ENCODE measurements at regions of chr9 and their contacts with region 1.

Region 1: DNA sequence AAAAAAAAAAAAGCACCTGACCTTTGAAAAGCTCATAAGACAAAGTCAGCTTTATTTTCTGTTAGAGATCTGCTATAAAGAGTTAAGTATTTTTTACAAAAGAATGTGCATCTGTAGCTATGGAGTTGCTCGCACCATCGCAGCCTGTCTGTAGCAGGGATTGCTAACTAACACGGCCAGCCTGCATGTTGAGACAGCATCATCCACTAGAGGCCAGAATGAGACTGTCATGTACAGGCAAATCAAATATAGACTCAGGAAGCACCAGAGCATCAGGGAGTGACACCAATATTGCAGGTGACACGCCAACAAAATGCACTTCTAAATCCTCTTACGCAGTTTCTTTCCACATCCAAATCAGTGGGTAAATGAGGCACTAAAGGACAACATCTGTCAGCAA is 136.3 kb upstream of the RASEF start:
- DNase-seq: peak; percentile 65
- H3K4me3 ChIP-seq: no peak overlapping the region
- H3K27ac ChIP-seq: no peak overlapping the region
- H3K4me1 ChIP-seq: no peaks in the 10 kb centered on the region
- H3K27me3 ChIP-seq: peaks cover 11 to 17% of the 10 kb centered on the region in 2 experiments
- CTCF ChIP-seq: peak; percentile 54 to 70
- POLR2A ChIP-seq: no peak

Region 2: DNA sequence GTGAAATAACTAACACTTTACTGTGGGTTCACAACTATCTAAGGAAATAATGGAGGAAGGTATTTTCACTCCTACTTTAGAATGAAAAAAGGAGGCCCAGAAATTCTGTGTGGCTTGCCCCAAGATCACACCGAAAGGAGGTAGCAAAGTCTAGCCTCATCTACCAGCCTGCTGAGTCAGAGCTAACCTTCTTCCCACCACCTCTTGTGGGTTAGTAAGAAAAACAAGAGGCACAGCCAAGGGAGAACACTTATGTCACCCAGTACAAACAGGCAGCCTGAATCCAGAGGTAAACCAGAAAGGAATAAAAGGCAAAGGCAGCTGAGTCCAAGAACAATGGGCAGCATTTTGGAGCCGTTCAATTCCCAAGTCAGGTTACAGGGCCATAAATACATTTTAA is 44.4 kb before region 1 on chr9:
- CTCF ChIA-PET with region 1: no interaction called
- POLR2A ChIA-PET with region 1: no interaction called
- dilution Hi-C with region 1: no loop called
- intact Hi-C with region 1: no loop called
- DNase-seq: no peak
- H3K4me3 ChIP-seq: no peak overlapping the region
- H3K27ac ChIP-seq: no peak overlapping the region
- H3K4me1 ChIP-seq: no peaks in the 10 kb centered on the region
- H3K27me3 ChIP-seq: no peaks in the 10 kb centered on the region
- CTCF ChIP-seq: no peak
- POLR2A ChIP-seq: no peak

Region 3: GRCh38 chr9:83182071-83182470 is 17.2 kb before region 1 on chr9:
- CTCF ChIA-PET with region 1: no interaction called
- POLR2A ChIA-PET with region 1: no interaction called
- dilution Hi-C with region 1: no loop called
- intact Hi-C with region 1: no loop called
- DNase-seq: no peak
- H3K4me3 ChIP-seq: no peak overlapping the region
- H3K27ac ChIP-seq: no peak overlapping the region
- H3K4me1 ChIP-seq: no peaks in the 10 kb centered on the region
- H3K27me3 ChIP-seq: no peaks in the 10 kb centered on the region
- CTCF ChIP-seq: no peak
- POLR2A ChIP-seq: no peak

Region 4: DNA sequence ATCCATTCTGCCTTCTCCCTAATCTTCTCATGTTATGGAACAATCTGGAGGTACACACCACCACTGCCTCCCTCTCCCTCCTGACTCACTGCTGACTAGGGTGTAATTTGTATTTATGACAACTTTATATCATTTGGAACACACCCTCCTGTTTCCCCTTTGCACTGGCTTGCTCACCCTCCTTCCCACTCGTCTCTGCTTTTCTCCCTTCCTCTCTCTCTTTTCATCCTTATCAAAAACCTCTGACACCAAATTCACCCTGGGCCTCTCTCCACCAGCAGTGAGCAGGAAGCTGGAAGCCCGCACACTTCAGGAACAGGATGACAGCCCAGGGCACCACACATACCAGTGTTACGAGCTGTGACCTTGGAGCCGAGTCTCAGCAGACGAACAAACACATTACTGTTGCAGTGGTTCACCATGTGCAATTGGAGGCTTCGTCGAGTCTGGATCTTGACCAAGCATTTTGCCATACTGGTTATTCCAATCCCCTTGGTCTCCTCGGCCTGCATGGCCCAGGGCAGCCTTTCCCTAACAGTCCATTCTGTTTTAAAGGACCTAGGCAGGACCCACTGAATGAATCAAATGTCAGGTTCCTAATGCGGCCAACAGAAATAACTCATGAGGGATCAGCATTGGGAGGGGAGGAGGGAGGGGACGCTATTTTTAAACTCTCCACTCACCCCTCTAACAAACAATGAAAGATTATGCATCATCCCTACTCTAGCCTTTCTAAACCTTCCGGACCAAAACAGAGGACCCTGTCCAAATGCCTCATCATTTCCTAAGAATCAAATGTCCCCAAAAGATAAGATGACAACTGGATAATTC is 67.6 kb after region 1 on chr9:
- CTCF ChIA-PET with region 1: no interaction called
- POLR2A ChIA-PET with region 1: no interaction called
- dilution Hi-C with region 1: no loop called
- intact Hi-C with region 1: no loop called
- DNase-seq: peak; percentile 67
- H3K4me3 ChIP-seq: peak overlapping the region in 1 of 3 experiments; percentile 60
- H3K27ac ChIP-seq: peak overlapping the region; percentile 79
- H3K4me1 ChIP-seq: peaks cover 72% of the 10 kb centered on the region
- H3K27me3 ChIP-seq: no peaks in the 10 kb centered on the region
- CTCF ChIP-seq: no peak
- POLR2A ChIP-seq: peak; percentile 61

Region 5: DNA sequence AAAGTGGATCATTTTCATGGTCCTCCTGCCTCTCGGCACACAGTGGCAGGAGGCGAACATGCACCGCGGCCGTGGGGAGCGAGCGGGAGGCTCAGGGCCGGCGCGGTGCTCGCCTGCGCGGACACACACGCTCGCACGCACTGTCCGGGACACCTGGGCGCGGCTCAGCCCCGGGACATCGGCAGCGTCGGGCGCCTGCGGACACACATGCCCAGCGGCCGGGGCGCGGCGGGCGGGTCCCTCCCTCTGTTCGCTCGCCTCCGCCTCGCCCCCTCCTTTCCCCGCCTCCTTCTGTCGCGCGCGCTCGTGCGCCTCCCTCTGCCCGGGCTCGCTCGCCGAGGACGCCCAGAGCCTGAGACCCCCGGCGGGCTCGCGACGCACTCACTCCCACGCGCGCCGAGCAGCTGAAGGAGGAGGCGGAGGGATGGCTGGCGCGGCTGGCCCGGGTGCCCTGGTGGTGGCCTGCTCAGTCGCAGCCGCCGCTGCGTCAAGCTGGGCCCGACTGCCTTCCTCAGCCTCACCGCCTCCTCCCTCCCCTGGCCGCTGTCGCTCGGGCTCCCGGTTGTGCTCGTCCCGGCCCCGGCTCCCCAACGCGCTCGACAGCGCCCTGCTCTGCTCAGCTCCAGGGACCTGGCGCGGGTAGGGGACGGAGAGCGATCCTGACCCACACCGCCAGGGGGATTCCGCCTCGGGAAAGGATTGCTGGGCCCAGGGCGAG is 339.1 kb after region 1 on chr9 and contains the start of gene FRMD3:
- CTCF ChIA-PET with region 1: interaction called, 85 read pairs
- POLR2A ChIA-PET with region 1: no interaction called
- dilution Hi-C with region 1: no loop called
- intact Hi-C with region 1: loop called (anchors 1 kb)
- DNase-seq: peak; percentile 66
- H3K4me3 ChIP-seq: peak within 1 kb of the TSS; percentile 29 to 40 (median 36)
- H3K27ac ChIP-seq: no peak within 1 kb of the TSS
- H3K4me1 ChIP-seq: peaks cover 6% of the 10 kb centered on the region
- H3K27me3 ChIP-seq: peaks cover 8 to 19% of the 10 kb centered on the region in 2 experiments
- CTCF ChIP-seq: peak; percentile 61 to 79
- POLR2A ChIP-seq: no peak
- total RNA-seq, gene FRMD3: 6.1 and 7.3 TPM in 2 replicates

Region 6: DNA sequence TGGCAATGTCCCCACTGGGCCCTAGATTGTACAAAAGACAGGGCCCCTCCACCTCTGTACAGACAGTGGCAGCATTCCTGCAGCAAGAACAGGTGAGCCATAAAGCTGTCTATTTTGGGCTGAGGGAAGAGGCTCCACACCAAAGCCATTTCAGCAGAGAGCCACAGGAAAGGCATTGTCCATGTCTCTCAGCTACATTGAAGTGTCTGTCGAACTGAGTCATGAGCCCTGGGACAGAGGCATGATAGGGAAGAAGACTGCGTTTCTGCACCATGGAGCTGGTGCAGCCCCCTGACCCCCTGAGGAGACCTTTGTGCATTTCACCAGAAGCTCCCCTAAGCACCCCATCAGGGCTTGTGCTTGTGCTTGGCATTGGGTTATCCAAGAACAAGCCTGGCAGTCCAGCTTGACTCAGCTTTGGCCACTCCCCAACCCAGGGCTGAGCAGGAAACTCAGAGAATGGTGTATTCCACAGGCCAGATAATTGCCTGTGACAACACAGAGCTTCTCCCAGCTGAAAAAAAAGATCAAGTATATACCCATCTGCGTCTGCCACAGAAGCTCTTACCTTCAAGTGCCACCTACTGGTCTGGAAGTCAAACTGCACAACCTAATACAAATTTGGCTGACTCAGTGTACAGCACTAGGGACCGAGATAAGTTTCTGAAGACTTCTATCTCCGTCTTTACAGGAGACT is 344.9 kb after region 1 on chr9:
- CTCF ChIA-PET with region 1: interaction called, 85 read pairs
- POLR2A ChIA-PET with region 1: no interaction called
- dilution Hi-C with region 1: no loop called
- intact Hi-C with region 1: loop called (anchors 1 kb)
- DNase-seq: peak; percentile 65
- H3K4me3 ChIP-seq: no peak overlapping the region
- H3K27ac ChIP-seq: no peak overlapping the region
- H3K4me1 ChIP-seq: no peaks in the 10 kb centered on the region
- H3K27me3 ChIP-seq: peaks cover 2% of the 10 kb centered on the region in 2 experiments
- CTCF ChIP-seq: peak; percentile 70 to 75
- POLR2A ChIP-seq: no peak

Region 7: GRCh38 chr9:83596896-83597504 is 397.8 kb after region 1 on chr9:
- CTCF ChIA-PET with region 1: interaction called, 7 read pairs
- POLR2A ChIA-PET with region 1: no interaction called
- dilution Hi-C with region 1: no loop called
- intact Hi-C with region 1: loop called (anchors 1 kb)
- DNase-seq: peak; percentile 31
- H3K4me3 ChIP-seq: no peak overlapping the region
- H3K27ac ChIP-seq: no peak overlapping the region
- H3K4me1 ChIP-seq: no peaks in the 10 kb centered on the region
- H3K27me3 ChIP-seq: no peaks in the 10 kb centered on the region
- CTCF ChIP-seq: peak; percentile 70 to 72
- POLR2A ChIP-seq: no peak

Region 8: DNA sequence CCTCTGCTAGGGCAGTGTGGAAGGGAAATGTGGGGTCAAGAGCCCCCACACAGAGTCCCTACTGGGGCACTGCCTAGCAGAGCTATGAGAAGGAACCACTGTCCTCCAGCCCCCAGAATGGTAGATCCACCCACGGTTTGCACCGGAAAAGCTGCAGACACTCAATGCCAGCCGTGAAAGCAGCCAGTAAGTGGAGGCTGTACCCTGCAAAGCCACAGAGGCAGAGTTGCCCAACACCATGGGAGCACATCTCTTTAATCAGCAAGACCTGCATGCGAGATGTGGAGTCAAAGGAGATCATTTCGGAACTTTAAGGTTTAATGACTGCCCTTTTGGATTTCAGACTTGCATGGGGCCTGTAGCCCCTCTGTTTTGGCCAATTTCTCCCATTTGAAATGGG is 566.1 kb after region 1 on chr9:
- CTCF ChIA-PET with region 1: no interaction called
- POLR2A ChIA-PET with region 1: no interaction called
- dilution Hi-C with region 1: no loop called
- intact Hi-C with region 1: no loop called
- DNase-seq: no peak
- H3K4me3 ChIP-seq: no peak overlapping the region
- H3K27ac ChIP-seq: no peak overlapping the region
- H3K4me1 ChIP-seq: no peaks in the 10 kb centered on the region
- H3K27me3 ChIP-seq: no peaks in the 10 kb centered on the region
- CTCF ChIP-seq: no peak
- POLR2A ChIP-seq: no peak